ENCODE measurements at regions of chr11 and their contacts with region 1.

Region 1: GRCh38 chr11:47152953-47153950 is 23.4 kb downstream of the ARFGAP2 start:
- DNase-seq: peak; percentile 60
- H3K4me3 ChIP-seq: no peak overlapping the region
- H3K27ac ChIP-seq: no peak overlapping the region
- H3K4me1 ChIP-seq: no peaks in the 10 kb centered on the region
- H3K27me3 ChIP-seq: no peaks in the 10 kb centered on the region
- CTCF ChIP-seq: peak; percentile 83 to 95 (median 90)
- POLR2A ChIP-seq: no peak

Region 2: DNA sequence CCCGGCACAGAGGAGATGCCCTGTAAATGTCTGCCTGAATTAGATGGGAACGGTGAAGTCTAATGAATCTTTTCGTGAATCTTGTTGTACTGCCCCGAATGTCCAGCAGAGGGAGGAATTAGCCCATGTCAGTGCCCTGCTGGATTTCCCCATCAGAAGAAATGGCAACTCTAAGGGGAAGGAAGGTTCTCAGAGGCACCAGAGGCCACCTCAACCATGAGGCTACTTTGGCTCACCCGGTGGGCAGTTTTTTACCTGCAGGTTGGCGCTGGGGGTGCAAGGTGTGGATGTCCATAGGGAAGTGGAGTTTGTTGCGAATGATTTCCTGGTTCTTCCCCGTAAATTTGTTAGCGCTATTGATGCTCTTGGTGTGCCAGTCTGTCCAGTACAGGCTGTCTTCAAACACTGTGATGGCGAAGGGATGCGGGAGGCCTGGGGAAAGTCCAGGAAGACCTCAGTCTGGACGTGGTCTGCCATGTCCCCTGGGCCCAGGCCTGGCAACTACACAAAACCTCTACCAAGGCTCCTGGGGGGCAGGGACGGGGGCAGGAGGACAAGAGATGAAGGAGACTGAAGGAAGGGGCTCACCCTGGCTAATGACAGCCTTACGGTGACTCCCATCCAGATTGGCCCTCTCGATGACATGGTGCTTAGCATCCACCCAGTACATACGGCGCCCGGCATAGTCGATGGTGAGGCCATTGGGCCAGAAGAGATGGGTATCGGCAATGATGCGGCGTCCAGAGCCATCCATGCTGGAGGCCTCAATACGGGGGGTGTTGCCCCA is 263.4 kb before region 1 on chr11:
- intact Hi-C with region 1: loop called (anchors 1 kb)
- DNase-seq: peak; percentile 76
- H3K4me3 ChIP-seq: no peak overlapping the region
- H3K27ac ChIP-seq: no peak overlapping the region
- H3K4me1 ChIP-seq: no peaks in the 10 kb centered on the region
- H3K27me3 ChIP-seq: no peaks in the 10 kb centered on the region
- CTCF ChIP-seq: peak; percentile 76 to 94 (median 90)
- POLR2A ChIP-seq: no peak

Measured in prostate gland (tissue), 2 donors.